ENCODE measurements at regions of chr2 and their contacts with region 1.

Region 1: DNA sequence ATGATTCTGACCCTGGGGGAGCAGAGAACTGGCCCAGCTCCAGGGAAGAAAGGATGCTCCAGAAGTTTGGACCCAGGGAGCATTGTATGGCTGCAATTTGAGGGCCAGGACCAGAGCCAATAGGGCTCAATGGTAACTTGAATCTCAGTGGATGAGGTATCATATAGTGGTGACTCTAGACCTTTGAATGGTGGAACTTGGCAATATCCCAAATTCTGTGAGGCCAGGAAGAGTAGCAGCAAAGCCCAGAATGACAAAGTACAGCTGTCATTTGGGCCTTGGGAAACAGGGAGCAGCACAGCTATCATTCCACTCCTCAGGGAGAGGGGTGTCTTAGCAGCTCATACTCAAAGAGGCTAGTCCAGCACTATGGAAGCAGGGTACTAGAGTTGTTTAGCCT is 332.9 kb upstream of the RBMS1 start:
- DNase-seq: no peak
- ATAC-seq: no peak
- H3K4me3 ChIP-seq: no peak overlapping the region
- H3K27ac ChIP-seq: no peak overlapping the region
- H3K4me1 ChIP-seq: no peaks in the 10 kb centered on the region
- H3K27me3 ChIP-seq: no peaks in the 10 kb centered on the region
- CTCF ChIP-seq: no peak
- POLR2A ChIP-seq: no peak
- RAD21 ChIP-seq: no peak

Region 2: GRCh38 chr2:159265171-159265576 is 1561.3 kb before region 1 on chr2:
- CTCF ChIA-PET with region 1: no interaction called
- POLR2A ChIA-PET with region 1: no interaction called
- dilution Hi-C with region 1: no loop called
- in situ Hi-C with region 1: no loop called
- intact Hi-C with region 1: no loop called
- DNase-seq: peak; percentile 76
- ATAC-seq: peak; percentile 71
- H3K4me3 ChIP-seq: no peak overlapping the region
- H3K27ac ChIP-seq: no peak overlapping the region
- H3K4me1 ChIP-seq: peaks cover 8% of the 10 kb centered on the region; the same call in 1 of the 2 replicates
- H3K27me3 ChIP-seq: no peaks in the 10 kb centered on the region
- CTCF ChIP-seq: no peak
- POLR2A ChIP-seq: no peak
- RAD21 ChIP-seq: no peak

Region 3: GRCh38 chr2:160657196-160657595 is 169.3 kb before region 1 on chr2:
- CTCF ChIA-PET with region 1: no interaction called
- POLR2A ChIA-PET with region 1: no interaction called
- dilution Hi-C with region 1: no loop called
- in situ Hi-C with region 1: no loop called
- intact Hi-C with region 1: no loop called
- DNase-seq: no peak
- ATAC-seq: peak; percentile 69
- H3K4me3 ChIP-seq: no peak overlapping the region
- H3K27ac ChIP-seq: no peak overlapping the region
- H3K4me1 ChIP-seq: peaks cover 2% of the 10 kb centered on the region; the same call in 1 of the 2 replicates
- H3K27me3 ChIP-seq: no peaks in the 10 kb centered on the region
- CTCF ChIP-seq: no peak
- POLR2A ChIP-seq: no peak
- RAD21 ChIP-seq: no peak

Region 4: GRCh38 chr2:160790738-160791137 is 35.8 kb before region 1 on chr2:
- CTCF ChIA-PET with region 1: no interaction called
- POLR2A ChIA-PET with region 1: no interaction called
- dilution Hi-C with region 1: no loop called
- in situ Hi-C with region 1: no loop called
- intact Hi-C with region 1: loop called (anchors 5 kb)
- DNase-seq: no peak
- ATAC-seq: no peak
- H3K4me3 ChIP-seq: no peak overlapping the region
- H3K27ac ChIP-seq: no peak overlapping the region
- H3K4me1 ChIP-seq: no peaks in the 10 kb centered on the region
- H3K27me3 ChIP-seq: no peaks in the 10 kb centered on the region; the same call in 1 of the 2 replicates
- CTCF ChIP-seq: no peak
- POLR2A ChIP-seq: no peak
- RAD21 ChIP-seq: no peak